IMR-90 (cell line): ENCODE measurements at regions of chr15 and their contacts with region 1.

Region 1: DNA sequence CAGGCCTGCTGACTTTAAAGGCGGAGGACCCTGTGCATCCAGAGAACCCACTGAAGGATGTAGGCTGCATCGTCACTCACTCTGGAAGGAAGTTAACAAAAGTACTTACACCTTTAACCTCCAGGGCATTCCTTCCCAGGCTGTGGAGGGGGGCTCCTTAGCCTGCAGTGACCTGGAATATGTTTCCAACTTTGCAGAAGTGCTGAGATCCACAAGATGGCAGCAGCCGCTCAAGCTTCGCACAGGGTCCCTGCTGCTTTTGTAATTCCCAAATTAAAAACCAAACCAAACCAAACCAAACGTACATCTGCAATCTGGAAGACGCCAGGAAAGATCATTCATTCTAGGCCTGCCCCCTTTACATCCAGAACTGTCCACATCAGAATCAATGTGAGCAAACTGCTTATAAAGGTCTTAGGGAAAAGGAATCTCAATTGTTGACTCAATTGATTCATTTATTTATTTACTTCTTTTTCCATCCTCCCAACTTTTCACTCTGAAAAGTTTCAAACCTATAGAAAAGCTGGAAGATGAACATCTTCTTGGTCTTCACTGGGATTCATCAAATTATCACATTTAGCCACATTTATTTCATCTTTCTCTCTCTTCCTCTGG is 70.5 kb upstream of the KLHL25 start:
- DNase-seq: peak; percentile 48
- ATAC-seq: peak; percentile 83
- H3K4me3 ChIP-seq: no peak overlapping the region
- H3K27ac ChIP-seq: no peak overlapping the region
- H3K4me1 ChIP-seq: no peaks in the 10 kb centered on the region
- H3K27me3 ChIP-seq: peaks cover 5% of the 10 kb centered on the region
- CTCF ChIP-seq: peak; percentile 69
- POLR2A ChIP-seq: no peak
- RAD21 ChIP-seq: peak; percentile 81

Region 2: DNA sequence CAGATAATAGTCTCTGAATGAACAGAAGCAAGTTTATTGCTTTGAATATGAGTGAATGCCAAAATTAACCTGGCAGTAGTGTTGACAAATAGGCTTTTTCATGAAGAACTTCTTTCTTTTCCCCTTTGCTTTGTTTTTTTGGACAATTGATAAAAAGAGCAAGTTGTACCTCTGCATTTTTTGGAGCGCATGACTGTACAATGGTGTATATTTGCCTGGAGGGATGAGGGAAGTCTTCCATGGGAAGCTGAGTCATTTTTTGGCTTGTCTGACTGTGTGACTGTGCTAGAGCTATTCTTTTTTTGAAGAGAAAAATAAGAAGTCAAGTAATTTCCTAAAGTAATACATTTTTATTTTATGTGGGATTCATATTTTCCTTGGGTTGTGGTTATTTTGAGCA is 257.3 kb before region 1 on chr15:
- CTCF ChIA-PET with region 1: no interaction called
- POLR2A ChIA-PET with region 1: no interaction called
- dilution Hi-C with region 1: no loop called
- in situ Hi-C with region 1: no loop called
- intact Hi-C with region 1: no loop called
- DNase-seq: peak; percentile 93
- ATAC-seq: peak; percentile 98
- H3K4me3 ChIP-seq: no peak overlapping the region
- H3K27ac ChIP-seq: no peak overlapping the region
- H3K4me1 ChIP-seq: peaks cover 9% of the 10 kb centered on the region
- H3K27me3 ChIP-seq: no peaks in the 10 kb centered on the region
- CTCF ChIP-seq: no peak
- POLR2A ChIP-seq: no peak
- RAD21 ChIP-seq: no peak

Region 3: DNA sequence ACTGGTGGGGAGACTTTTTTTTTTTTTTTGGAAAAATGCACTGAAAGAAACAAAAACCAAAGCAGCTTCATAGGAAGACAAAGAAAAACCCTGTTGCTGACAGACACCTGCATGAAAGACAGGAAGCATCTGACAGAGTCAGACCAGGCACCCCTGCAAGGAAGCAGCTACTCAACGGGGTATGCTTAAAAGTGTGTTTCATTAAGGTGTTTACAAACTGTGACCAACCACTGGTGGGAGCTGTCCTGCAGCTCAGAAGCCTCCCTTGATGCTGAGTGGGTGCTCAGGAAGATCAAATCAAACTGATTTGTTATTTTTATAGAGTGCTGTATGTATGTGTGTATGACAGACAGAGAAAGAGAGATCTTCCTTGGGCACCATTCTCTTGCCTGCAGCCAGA is 179.8 kb after region 1 on chr15:
- CTCF ChIA-PET with region 1: no interaction called
- POLR2A ChIA-PET with region 1: no interaction called
- dilution Hi-C with region 1: no loop called
- in situ Hi-C with region 1: no loop called
- intact Hi-C with region 1: no loop called
- DNase-seq: no peak
- ATAC-seq: no peak
- H3K4me3 ChIP-seq: no peak overlapping the region
- H3K27ac ChIP-seq: no peak overlapping the region
- H3K4me1 ChIP-seq: no peaks in the 10 kb centered on the region
- H3K27me3 ChIP-seq: no peaks in the 10 kb centered on the region
- CTCF ChIP-seq: no peak
- POLR2A ChIP-seq: no peak
- RAD21 ChIP-seq: no peak

Region 4: GRCh38 chr15:87401973-87402372 is 1536.8 kb after region 1 on chr15:
- CTCF ChIA-PET with region 1: no interaction called
- POLR2A ChIA-PET with region 1: no interaction called
- dilution Hi-C with region 1: no loop called
- in situ Hi-C with region 1: no loop called
- intact Hi-C with region 1: no loop called
- DNase-seq: no peak
- ATAC-seq: no peak
- H3K4me3 ChIP-seq: no peak overlapping the region
- H3K27ac ChIP-seq: no peak overlapping the region
- H3K4me1 ChIP-seq: no peaks in the 10 kb centered on the region
- H3K27me3 ChIP-seq: no peaks in the 10 kb centered on the region
- CTCF ChIP-seq: no peak
- POLR2A ChIP-seq: no peak
- RAD21 ChIP-seq: no peak

Region 5: DNA sequence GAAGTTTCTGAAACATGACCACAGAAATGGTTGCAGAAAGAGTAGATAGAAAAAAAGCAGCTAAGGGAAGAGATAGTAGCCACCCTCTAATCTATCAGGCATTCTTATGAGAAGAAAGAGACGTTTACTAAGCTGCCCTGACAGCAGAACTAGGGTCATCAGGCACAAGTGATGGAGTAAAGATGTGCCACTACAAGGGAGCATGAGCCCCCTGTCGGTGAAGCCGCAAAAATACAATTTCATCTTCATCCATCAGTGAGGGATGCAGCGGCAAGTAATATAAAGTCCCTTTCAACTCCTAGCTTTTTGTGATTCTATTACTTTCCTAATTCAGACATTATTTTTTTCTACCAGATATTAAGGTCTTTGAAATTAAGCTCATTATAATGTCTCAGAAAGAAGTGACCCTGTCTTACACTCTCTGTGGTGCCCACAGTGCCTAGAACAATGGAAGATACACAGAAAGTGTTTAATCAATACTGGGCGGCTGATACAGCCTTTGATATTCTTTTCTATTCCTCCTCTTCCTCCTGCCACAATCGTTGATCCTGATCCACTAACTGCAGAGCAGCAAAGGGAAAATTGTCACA is 1739.8 kb after region 1 on chr15:
- CTCF ChIA-PET with region 1: no interaction called
- POLR2A ChIA-PET with region 1: no interaction called
- dilution Hi-C with region 1: no loop called
- in situ Hi-C with region 1: no loop called
- intact Hi-C with region 1: loop called (anchors 10 kb)
- DNase-seq: no peak
- ATAC-seq: no peak
- H3K4me3 ChIP-seq: no peak overlapping the region
- H3K27ac ChIP-seq: no peak overlapping the region
- H3K4me1 ChIP-seq: no peaks in the 10 kb centered on the region
- H3K27me3 ChIP-seq: no peaks in the 10 kb centered on the region
- CTCF ChIP-seq: peak; percentile 28
- POLR2A ChIP-seq: no peak
- RAD21 ChIP-seq: peak; percentile 34; the same call in 1 of the 2 replicates